H1 (cell line): ENCODE measurements at regions of chr5 and their contacts with region 1.

Region 1: GRCh38 chr5:146965761-146966659 is 87.5 kb upstream of the PPP2R2B start:
- DNase-seq: peak; percentile 15 to 75
- H3K4me3 ChIP-seq: no peak overlapping the region
- H3K27ac ChIP-seq: no peak overlapping the region
- H3K4me1 ChIP-seq: no peaks in the 10 kb centered on the region; a peak in 1 of 7 replicates
- H3K27me3 ChIP-seq: no peaks in the 10 kb centered on the region
- CTCF ChIP-seq: peak; percentile 29 to 85 (median 83)
- EP300 ChIP-seq: no peak
- POLR2A ChIP-seq: no peak
- RAD21 ChIP-seq: peak; percentile 97 to 98

Region 2: DNA sequence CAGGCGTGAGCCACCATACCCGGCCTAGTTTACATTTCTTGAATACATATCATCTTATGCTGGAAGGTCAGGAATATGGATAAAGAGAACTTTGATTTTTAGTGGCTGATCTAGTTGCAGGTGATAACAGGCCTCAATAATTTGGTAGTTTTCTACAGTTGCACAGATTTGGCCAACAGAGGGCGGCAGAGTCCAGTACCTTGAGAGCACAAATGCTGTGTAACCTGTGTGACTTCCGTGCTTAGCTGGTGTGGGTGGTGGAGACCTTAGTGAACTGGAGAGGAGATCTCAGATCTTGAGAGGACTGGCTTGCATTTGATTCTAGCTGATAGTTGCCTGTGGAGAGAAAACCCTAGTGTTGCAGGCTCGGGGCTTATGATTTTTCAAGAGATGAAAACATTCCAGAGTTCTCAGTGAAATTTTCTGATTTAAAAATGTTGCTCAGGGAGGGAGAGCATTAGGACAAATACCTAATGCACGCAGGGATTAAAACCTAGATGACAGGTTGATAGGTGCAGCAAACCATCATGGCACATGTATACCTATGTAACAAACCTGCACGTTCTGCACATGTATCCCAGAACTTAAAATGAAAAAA is 432.7 kb before region 1 on chr5:
- CTCF ChIA-PET with region 1: interaction called, 123 read pairs
- POLR2A ChIA-PET with region 1: no interaction called
- DNase-seq: peak; percentile 60 to 84
- H3K4me3 ChIP-seq: no peak overlapping the region
- H3K27ac ChIP-seq: no peak overlapping the region
- H3K4me1 ChIP-seq: peaks cover 0 to 7% (median 3%) of the 10 kb centered on the region in 4 experiments; a peak in 4 of 7 replicates
- H3K27me3 ChIP-seq: no peaks in the 10 kb centered on the region
- CTCF ChIP-seq: peak; percentile 61 to 92 (median 82)
- EP300 ChIP-seq: no peak
- POLR2A ChIP-seq: no peak
- RAD21 ChIP-seq: peak; percentile 92 to 93

Region 3: DNA sequence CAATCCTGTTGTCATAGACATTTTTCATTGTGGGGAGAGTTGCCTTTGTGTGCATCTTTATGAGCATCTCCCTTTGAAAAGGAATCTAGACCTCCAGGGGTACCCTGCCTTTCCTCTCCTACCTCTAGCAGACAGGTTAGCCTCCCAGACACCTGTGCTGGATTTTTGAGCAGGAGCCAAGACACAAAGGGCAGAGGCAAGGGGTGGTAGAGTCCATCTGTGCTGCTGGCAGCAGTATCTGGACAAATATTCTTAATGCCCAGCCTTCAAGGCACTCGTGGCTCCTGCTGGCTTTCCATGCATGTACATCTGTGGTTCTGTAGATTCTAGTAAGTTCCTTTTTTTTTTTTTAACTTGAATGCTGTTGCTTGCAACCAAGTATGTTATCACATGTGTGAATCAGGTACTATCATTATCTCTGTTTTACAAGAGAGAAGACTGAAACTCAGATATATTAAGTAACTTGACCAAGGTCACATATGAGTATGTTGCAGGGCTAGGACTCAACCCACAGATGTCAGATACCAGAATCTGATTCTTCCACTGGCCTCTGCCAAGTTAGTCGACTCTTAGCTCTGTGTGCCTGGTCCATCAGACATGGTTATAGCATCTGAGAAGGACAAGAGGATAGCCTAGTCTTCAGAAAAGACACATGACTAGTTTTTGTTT is 417.1 kb before region 1 on chr5:
- CTCF ChIA-PET with region 1: interaction called, 14 read pairs
- POLR2A ChIA-PET with region 1: no interaction called
- DNase-seq: no peak
- H3K4me3 ChIP-seq: no peak overlapping the region
- H3K27ac ChIP-seq: no peak overlapping the region
- H3K4me1 ChIP-seq: no peaks in the 10 kb centered on the region
- H3K27me3 ChIP-seq: no peaks in the 10 kb centered on the region
- CTCF ChIP-seq: no peak
- EP300 ChIP-seq: no peak
- POLR2A ChIP-seq: no peak
- RAD21 ChIP-seq: no peak

Region 4: GRCh38 chr5:146580237-146580636 is 385.8 kb before region 1 on chr5:
- CTCF ChIA-PET with region 1: interaction called, 11 read pairs
- POLR2A ChIA-PET with region 1: no interaction called
- DNase-seq: no peak
- H3K4me3 ChIP-seq: no peak overlapping the region
- H3K27ac ChIP-seq: no peak overlapping the region
- H3K4me1 ChIP-seq: no peaks in the 10 kb centered on the region
- H3K27me3 ChIP-seq: no peaks in the 10 kb centered on the region; a peak in 1 of 7 replicates
- CTCF ChIP-seq: no peak
- EP300 ChIP-seq: no peak
- POLR2A ChIP-seq: no peak
- RAD21 ChIP-seq: no peak

Region 5: GRCh38 chr5:146640285-146640896 is 325.6 kb before region 1 on chr5:
- CTCF ChIA-PET with region 1: interaction called, 16 read pairs
- POLR2A ChIA-PET with region 1: no interaction called
- DNase-seq: no peak
- H3K4me3 ChIP-seq: no peak overlapping the region
- H3K27ac ChIP-seq: no peak overlapping the region
- H3K4me1 ChIP-seq: peaks cover 0 to 4% (median 1%) of the 10 kb centered on the region in 4 experiments; a peak in 3 of 7 replicates
- H3K27me3 ChIP-seq: no peaks in the 10 kb centered on the region
- CTCF ChIP-seq: no peak
- EP300 ChIP-seq: no peak
- POLR2A ChIP-seq: no peak
- RAD21 ChIP-seq: no peak

Region 6: GRCh38 chr5:146828385-146828784 is 137.6 kb before region 1 on chr5:
- CTCF ChIA-PET with region 1: no interaction called
- POLR2A ChIA-PET with region 1: no interaction called
- DNase-seq: no peak
- H3K4me3 ChIP-seq: no peak overlapping the region
- H3K27ac ChIP-seq: no peak overlapping the region
- H3K4me1 ChIP-seq: 0 out of 7 replicates have a peak, but pooled peaks cover 0 to 2% (median 0%) of the 10 kb centered on the region in 4 experiments
- H3K27me3 ChIP-seq: peaks cover 0 to 1% (median 0%) of the 10 kb centered on the region in 4 experiments; a peak in 1 of 7 replicates
- CTCF ChIP-seq: no peak
- EP300 ChIP-seq: no peak
- POLR2A ChIP-seq: no peak
- RAD21 ChIP-seq: no peak

Region 7: GRCh38 chr5:146883511-146883910 is 82.5 kb before region 1 on chr5:
- CTCF ChIA-PET with region 1: no interaction called
- POLR2A ChIA-PET with region 1: no interaction called
- DNase-seq: no peak
- H3K4me3 ChIP-seq: no peak overlapping the region
- H3K27ac ChIP-seq: no peak overlapping the region
- H3K4me1 ChIP-seq: peaks cover 5 to 7% (median 7%) of the 10 kb centered on the region in 4 experiments; a peak in 6 of 7 replicates
- H3K27me3 ChIP-seq: peaks cover 0 to 12% (median 8%) of the 10 kb centered on the region in 4 experiments; a peak in 5 of 7 replicates
- CTCF ChIP-seq: no peak
- EP300 ChIP-seq: no peak
- POLR2A ChIP-seq: no peak
- RAD21 ChIP-seq: no peak

Region 8: DNA sequence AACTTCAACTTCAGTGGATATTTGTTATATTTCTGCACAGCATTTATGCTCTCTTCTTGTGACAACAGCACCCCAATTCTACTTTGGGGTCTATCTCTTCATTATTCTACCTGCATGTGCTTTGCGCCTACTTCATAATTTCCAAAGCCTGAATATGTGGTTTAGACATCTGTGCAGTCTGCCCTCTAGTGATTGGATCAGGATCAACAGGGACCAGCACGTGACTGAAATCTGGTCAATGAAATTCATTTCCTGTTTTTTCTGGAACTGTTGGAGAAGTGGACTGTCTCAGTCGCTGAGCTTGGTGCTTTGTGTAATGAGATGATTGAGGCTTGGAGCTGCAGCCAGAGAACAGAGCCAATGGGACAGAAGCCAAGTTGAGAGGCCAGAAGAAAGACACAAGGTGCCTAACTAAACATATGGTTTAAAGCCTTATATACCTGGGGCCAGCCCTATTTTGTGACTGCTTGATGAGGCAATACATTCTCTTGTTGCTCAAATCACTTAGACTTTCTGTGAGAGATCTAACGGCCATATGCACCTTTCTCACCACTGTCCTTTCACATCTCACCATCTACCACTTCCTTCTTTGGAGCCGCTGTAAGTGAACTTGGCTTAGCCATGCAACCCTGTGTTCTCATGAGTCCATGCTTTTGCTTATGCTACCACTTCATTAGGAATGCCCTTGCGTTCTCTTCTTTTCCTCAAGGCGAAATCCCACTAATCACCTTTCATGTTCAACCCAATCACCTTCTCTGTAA is 18.6 kb before region 1 on chr5:
- CTCF ChIA-PET with region 1: interaction called, 29 read pairs
- POLR2A ChIA-PET with region 1: no interaction called
- DNase-seq: no peak
- H3K4me3 ChIP-seq: no peak overlapping the region
- H3K27ac ChIP-seq: no peak overlapping the region
- H3K4me1 ChIP-seq: peaks cover 0 to 3% (median 1%) of the 10 kb centered on the region in 4 experiments; a peak in 3 of 7 replicates
- H3K27me3 ChIP-seq: no peaks in the 10 kb centered on the region
- CTCF ChIP-seq: peak in 2 of 3 experiments; percentile 56 to 78; a peak in 3 of 4 replicates
- EP300 ChIP-seq: no peak
- POLR2A ChIP-seq: no peak
- RAD21 ChIP-seq: peak; percentile 70 to 75